GM12878 (cell line): ENCODE measurements at regions of chr1 and their contacts with region 1.

Region 1: GRCh38 chr1:193121616-193122593 is at the start of gene CDC73:
- DNase-seq: peak; percentile 89
- ATAC-seq: peak; percentile 93
- H3K4me3 ChIP-seq: peak within 1 kb of the TSS; percentile 91
- H3K27ac ChIP-seq: peak within 1 kb of the TSS; percentile 92
- H3K4me1 ChIP-seq: no peaks in the 10 kb centered on the region; the same call in 1 of the 2 replicates
- H3K27me3 ChIP-seq: no peaks in the 10 kb centered on the region
- CTCF ChIP-seq: peak; percentile 87 to 96 (median 88)
- EP300 ChIP-seq: peak in 1 of 2 experiments; percentile 25; a peak in 1 of 4 replicates
- POLR2A ChIP-seq: peak; percentile 97
- RAD21 ChIP-seq: peak; percentile 74
- polyA plus RNA-seq, gene CDC73: 21.0 to 21.3 TPM

Region 2: GRCh38 chr1:193019442-193020026 is 102.4 kb before region 1 on chr1:
- CTCF ChIA-PET with region 1: interaction called, 12 read pairs
- POLR2A ChIA-PET with region 1: no interaction called
- RAD21 ChIA-PET with region 1: interaction called, 5 read pairs
- SMC1A ChIA-PET with region 1: no interaction called
- in situ Hi-C with region 1: no loop called
- intact Hi-C with region 1: no loop called
- DNase-seq: no peak
- ATAC-seq: peak; percentile 76
- H3K4me3 ChIP-seq: no peak overlapping the region
- H3K27ac ChIP-seq: no peak overlapping the region
- H3K4me1 ChIP-seq: no peaks in the 10 kb centered on the region
- H3K27me3 ChIP-seq: no peaks in the 10 kb centered on the region
- CTCF ChIP-seq: peak; percentile 22 to 53 (median 33); a peak in 4 of 6 replicates
- EP300 ChIP-seq: no peak
- POLR2A ChIP-seq: no peak
- RAD21 ChIP-seq: peak; percentile 62

Region 3: DNA sequence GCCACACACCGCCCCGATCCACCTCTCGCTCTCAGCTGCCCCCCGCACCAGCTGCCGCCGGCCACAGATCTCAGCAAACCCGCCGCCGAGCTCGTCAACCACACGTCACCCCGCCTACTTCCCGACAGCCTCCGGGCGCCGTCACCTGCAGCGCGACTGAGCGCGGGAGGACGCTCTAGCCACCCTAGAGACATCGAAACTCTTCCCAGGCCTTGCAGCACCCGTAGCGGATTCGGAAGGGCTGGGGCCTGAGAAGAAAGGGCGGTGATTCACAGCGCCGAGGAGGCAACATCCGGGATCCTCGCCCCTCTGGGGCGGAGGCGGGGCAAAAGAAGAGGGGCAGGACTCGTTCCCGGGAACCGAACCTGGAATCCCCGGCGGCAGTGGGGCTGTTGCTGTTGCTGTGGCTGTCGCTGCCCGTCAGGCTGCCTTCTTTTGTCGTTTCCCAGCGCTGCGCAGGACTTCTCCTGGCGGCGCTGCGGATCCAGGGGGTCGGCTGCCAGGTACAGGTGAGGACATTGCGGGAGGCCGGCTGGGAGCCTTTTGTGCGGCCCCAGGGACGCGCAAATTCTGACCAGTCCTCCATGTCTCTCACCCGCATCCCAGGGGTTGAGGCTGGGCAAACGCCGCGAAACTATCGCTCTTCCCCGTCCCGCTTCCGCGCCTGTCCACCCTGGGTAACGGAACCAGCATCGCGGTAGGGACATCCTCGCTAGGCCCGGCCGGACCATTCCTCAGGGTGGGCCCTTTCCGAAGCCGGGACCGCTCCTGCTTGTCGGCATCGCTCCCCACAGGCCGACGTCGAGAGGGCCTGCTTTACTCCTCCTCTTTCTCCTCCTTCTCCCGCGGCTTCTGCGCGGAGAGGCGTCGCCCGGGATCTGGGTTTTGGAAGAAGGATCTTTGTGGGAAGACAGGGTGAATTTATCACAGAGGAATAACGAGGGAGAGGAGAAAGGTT is 62.4 kb before region 1 on chr1 and contains the starts of genes RO60 and UCHL5:
- CTCF ChIA-PET with region 1: interaction called, 6 read pairs
- POLR2A ChIA-PET with region 1: interaction called, 19 read pairs
- RAD21 ChIA-PET with region 1: interaction called, 8 read pairs
- SMC1A ChIA-PET with region 1: interaction called, 7 read pairs
- in situ Hi-C with region 1: no loop called
- intact Hi-C with region 1: loop called (anchors 2 kb)
- DNase-seq: peak; percentile 93
- ATAC-seq: peak; percentile 89
- H3K4me3 ChIP-seq: peak within 1 kb of the TSS; percentile 80
- H3K27ac ChIP-seq: peak within 1 kb of the TSS; percentile 95
- H3K4me1 ChIP-seq: peaks cover 28% of the 10 kb centered on the region
- H3K27me3 ChIP-seq: no peaks in the 10 kb centered on the region
- CTCF ChIP-seq: peak in 1 of 3 experiments; percentile 9; a peak in 1 of 6 replicates
- EP300 ChIP-seq: peak; percentile 38 to 60; a peak in 3 of 4 replicates
- POLR2A ChIP-seq: peak; percentile 95
- RAD21 ChIP-seq: no peak
- polyA plus RNA-seq, gene RO60: 25.4 to 103 TPM
- polyA plus RNA-seq, gene UCHL5: 36.5 to 45.6 TPM

Region 4: GRCh38 chr1:193069748-193070385 is 52.0 kb before region 1 on chr1:
- CTCF ChIA-PET with region 1: interaction called, 11 read pairs
- POLR2A ChIA-PET with region 1: interaction called, 3 read pairs
- RAD21 ChIA-PET with region 1: interaction called, 10 read pairs
- SMC1A ChIA-PET with region 1: interaction called, 9 read pairs
- in situ Hi-C with region 1: no loop called
- intact Hi-C with region 1: loop called (anchors 2 kb)
- DNase-seq: no peak
- ATAC-seq: peak; percentile 35
- H3K4me3 ChIP-seq: 0 out of 2 replicates have a peak overlapping the region, but pooled peaks have one; percentile 11
- H3K27ac ChIP-seq: peak overlapping the region; percentile 62
- H3K4me1 ChIP-seq: peaks cover 26% of the 10 kb centered on the region
- H3K27me3 ChIP-seq: no peaks in the 10 kb centered on the region
- CTCF ChIP-seq: peak; percentile 45 to 66 (median 55)
- EP300 ChIP-seq: no peak
- POLR2A ChIP-seq: no peak
- RAD21 ChIP-seq: 0 out of 2 replicates have a peak, but pooled peaks have one; percentile 32

Region 5: DNA sequence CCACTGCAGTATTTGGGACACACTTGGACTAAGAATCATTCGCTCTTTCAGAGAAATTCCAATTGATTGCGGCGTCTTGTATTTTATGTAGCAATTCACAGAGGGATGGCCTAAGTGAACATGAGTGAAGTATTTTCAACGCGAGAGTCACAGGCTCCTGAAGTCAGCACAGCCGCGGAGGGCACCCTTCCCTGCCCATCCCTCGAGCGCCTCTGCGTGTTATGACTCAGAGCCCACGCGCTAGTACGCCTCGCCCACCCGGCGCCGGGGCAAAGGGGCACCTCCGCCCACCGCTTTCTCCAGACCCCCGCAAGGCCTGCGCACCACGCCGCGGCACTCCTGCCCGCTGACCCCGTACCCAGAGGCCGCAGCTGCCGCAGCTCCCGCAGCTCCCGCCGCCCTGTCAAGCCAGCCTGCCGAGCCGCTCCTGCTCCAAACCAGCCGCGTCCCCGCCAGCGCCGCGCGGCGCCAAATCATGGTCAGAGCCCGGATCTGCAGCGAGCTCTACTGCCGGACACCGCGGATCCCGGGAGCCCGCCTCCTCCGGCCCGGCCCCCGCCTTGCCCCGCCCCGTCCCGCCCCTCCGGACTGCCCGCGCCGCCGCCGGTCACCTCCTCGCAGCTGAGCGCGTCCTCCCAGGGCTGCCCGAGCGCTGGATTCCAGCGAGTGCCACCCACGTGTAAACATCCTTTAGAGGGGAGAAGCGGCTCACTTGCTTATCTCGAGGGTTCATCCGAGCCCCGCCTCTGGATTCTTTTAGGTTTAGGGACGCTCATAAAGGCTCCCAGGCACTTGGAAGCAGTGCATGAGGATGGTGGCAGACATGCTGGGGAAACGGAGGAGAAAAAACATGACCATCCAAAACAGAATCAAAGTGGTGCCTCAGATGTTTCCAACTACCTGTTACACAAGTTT is 16.7 kb before region 1 on chr1 and contains the start of gene GLRX2:
- CTCF ChIA-PET with region 1: interaction called, 12 read pairs
- POLR2A ChIA-PET with region 1: interaction called, 26 read pairs
- RAD21 ChIA-PET with region 1: interaction called, 12 read pairs
- SMC1A ChIA-PET with region 1: interaction called, 8 read pairs
- in situ Hi-C with region 1: no loop called
- intact Hi-C with region 1: loop called (anchors 1 kb)
- DNase-seq: no peak
- ATAC-seq: peak; percentile 95
- H3K4me3 ChIP-seq: peak within 1 kb of the TSS; percentile 87
- H3K27ac ChIP-seq: peak within 1 kb of the TSS; percentile 58
- H3K4me1 ChIP-seq: no peaks in the 10 kb centered on the region
- H3K27me3 ChIP-seq: no peaks in the 10 kb centered on the region
- CTCF ChIP-seq: peak in 1 of 3 experiments; percentile 10; a peak in 1 of 6 replicates
- EP300 ChIP-seq: no peak
- POLR2A ChIP-seq: peak; percentile 86
- RAD21 ChIP-seq: peak; percentile 32; the same call in 1 of the 2 replicates
- polyA plus RNA-seq, gene GLRX2: 5.5 to 7.8 TPM

Region 6: DNA sequence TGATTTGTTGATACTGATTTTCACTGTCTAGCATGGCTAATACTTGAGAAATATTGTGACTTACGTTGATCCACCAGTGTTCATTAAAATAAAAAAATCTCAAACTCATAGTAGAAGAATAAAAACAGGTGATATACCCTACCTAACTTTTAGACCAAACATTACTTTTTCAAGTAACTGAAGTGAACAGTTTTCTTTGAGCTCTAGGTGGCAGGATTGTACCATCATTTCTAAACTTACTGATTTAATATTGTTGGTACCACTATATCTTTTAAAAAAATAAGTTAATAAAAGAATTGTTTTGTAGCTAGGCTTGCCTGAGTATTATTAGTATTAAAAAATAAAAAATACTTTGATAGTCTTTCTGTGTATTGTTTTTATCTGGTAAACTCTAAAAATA is 21.4 kb after region 1 on chr1:
- CTCF ChIA-PET with region 1: interaction called, 11 read pairs
- POLR2A ChIA-PET with region 1: no interaction called
- RAD21 ChIA-PET with region 1: no interaction called
- SMC1A ChIA-PET with region 1: interaction called, 3 read pairs
- in situ Hi-C with region 1: no loop called
- intact Hi-C with region 1: no loop called
- DNase-seq: no peak
- ATAC-seq: peak; percentile 58; the same call in 2 of the 3 replicates
- H3K4me3 ChIP-seq: no peak overlapping the region
- H3K27ac ChIP-seq: no peak overlapping the region
- H3K4me1 ChIP-seq: no peaks in the 10 kb centered on the region
- H3K27me3 ChIP-seq: no peaks in the 10 kb centered on the region
- CTCF ChIP-seq: peak in 1 of 3 experiments; percentile 11; a peak in 1 of 6 replicates
- EP300 ChIP-seq: no peak
- POLR2A ChIP-seq: no peak
- RAD21 ChIP-seq: no peak